Activated B cell treated with CpG ODN at 0.5 μM for 24 hours (primary cell): ENCODE measurements at regions of chr2 and their contacts with region 1.

Region 1: DNA sequence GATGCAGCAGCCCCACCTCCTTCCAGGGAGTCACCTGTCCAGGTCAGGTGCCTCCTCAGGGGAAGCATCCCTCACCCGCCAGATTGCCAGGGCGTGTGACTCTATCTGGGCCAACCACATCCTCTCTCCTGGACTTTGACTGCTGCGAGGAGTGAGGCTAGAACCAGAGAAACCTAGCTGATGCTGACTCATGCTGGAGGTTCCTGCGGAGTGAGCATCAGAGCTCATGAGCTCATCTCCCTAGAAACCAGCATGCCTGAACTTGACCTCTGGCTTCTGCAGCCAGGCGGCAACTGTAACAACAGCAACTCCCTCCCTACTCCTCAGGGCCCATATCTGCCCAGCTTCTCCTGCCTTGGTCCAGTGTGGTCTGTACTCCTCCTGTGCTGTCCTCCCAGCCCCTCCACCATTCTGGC is 28.3 kb upstream of the NT5DC4 start:
- DNase-seq: no peak
- ATAC-seq: peak; percentile 43
- H3K4me3 Mint-ChIP-seq: no peak overlapping the region
- H3K27ac Mint-ChIP-seq: peak overlapping the region; percentile 37
- H3K4me1 Mint-ChIP-seq: peaks cover 17% of the 10 kb centered on the region
- H3K27me3 Mint-ChIP-seq: no peaks in the 10 kb centered on the region
- CTCF ChIP-seq: no peak

Region 2: GRCh38 chr2:112601751-112602150 is 90.8 kb before region 1 on chr2:
- CTCF ChIA-PET with region 1: interaction called, 3 read pairs
- POLR2A ChIA-PET with region 1: no interaction called
- intact Hi-C with region 1: loop called (anchors 1 kb)
- DNase-seq: no peak
- ATAC-seq: no peak
- H3K4me3 Mint-ChIP-seq: no peak overlapping the region
- H3K27ac Mint-ChIP-seq: no peak overlapping the region
- H3K4me1 Mint-ChIP-seq: peaks cover 6% of the 10 kb centered on the region
- H3K27me3 Mint-ChIP-seq: no peaks in the 10 kb centered on the region
- CTCF ChIP-seq: no peak

Region 3: DNA sequence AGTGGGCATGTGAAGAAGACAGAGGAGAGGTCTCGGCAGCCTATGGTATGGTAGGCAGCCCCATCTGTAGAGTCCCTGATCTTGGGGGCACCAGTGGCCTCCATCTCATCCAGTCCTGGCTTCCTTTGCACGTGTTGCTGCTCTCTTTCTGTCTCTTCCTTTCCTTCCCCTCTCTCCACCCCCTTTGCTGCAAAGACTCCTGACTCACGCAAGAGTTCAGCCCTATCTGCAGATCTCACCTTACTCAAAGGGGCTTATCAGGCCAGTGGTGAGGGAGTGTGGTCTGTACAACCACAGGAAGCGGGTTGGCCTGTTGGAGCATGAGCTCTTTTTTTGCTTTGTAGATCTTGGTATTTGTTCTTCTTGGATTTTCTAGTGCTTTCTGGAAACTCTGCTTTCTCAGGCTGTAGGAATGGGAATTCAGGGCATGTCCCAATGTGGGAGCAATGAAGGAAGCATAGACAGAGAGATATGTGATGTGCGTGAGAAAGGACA is 13.7 kb after region 1 on chr2:
- CTCF ChIA-PET with region 1: interaction called, 16 read pairs
- POLR2A ChIA-PET with region 1: interaction called, 23 read pairs
- intact Hi-C with region 1: loop called (anchors 1 kb)
- DNase-seq: no peak
- ATAC-seq: peak; percentile 56
- H3K4me3 Mint-ChIP-seq: peak overlapping the region; percentile 58
- H3K27ac Mint-ChIP-seq: peak overlapping the region; percentile 85
- H3K4me1 Mint-ChIP-seq: peaks cover 85% of the 10 kb centered on the region
- H3K27me3 Mint-ChIP-seq: no peaks in the 10 kb centered on the region
- CTCF ChIP-seq: no peak